Aorta (tissue), 5 donors: ENCODE measurements at regions of chr16 and their contacts with region 1.

Region 1: DNA sequence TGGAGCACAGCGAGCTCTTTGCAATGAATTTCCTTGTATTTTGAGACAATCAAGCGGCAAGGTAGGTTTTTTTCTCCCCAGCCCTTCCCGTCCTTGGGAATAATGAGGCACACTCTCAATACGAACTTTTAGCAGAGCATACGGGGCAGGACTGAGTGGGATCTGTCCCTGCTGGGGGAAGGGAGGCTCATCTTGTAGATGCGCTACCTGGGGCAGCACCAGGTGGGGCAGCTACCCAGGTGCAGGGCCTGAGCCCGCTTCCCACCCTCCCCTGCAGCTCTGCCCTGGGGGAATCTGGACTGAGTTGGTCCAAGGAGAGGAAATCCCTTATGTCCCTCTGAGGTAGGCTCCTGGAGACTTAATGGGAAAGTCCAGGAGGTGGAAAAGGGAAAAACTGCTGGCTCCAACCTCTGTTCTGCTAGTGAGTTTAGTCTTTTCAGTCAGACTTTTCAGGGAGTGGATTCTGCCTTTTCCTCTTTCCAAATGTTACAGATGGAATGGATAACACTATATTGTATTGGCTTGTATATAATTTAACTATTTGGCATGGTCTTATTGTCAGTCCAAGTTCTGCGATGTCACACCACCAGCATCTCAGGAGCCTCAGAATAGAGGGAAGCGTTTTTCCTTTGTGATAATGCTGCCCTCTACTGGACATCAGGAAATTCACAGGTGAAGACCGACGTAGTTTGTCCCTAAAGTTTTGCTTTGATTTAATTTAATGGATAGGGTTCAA is 9.6 kb upstream of the CES1 start:
- DNase-seq: no peak
- ATAC-seq: peak; percentile 63
- H3K4me3 ChIP-seq: no peak overlapping the region
- H3K27ac ChIP-seq: no peak overlapping the region
- H3K4me1 ChIP-seq: no peaks in the 10 kb centered on the region
- H3K27me3 ChIP-seq: peaks cover 0 to 2% of the 10 kb centered on the region in 2 donors

Region 2: GRCh38 chr16:55711959-55712876 is 130.3 kb before region 1 on chr16:
- intact Hi-C with region 1: loop called (anchors 1 to 5 kb)
- DNase-seq: peak; percentile 61 to 85
- ATAC-seq: peak; percentile 74
- H3K4me3 ChIP-seq: no peak overlapping the region
- H3K27ac ChIP-seq: no peak overlapping the region
- H3K4me1 ChIP-seq: no peaks in the 10 kb centered on the region
- H3K27me3 ChIP-seq: peaks cover 0 to 2% of the 10 kb centered on the region in 2 donors

Region 3: DNA sequence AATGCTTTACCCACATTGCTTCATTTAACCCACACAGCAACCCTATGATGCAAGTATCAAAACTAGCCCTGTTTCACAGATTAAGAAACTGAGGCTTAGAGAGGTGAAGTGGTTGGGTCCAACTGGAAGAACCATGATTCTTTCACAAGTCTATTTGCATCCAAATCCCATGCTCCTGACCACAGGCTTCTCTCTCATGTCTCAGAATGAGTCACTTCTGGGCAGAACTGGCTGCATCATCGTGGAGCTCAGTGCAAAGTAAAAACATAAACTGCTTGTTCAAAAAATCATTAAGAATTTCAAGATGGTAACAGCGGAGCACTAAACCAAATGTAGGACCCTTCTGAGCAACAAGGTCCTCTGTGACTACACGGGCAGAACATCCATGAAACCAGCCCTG is 10.6 kb after region 1 on chr16:
- intact Hi-C with region 1: no loop called
- DNase-seq: no peak
- ATAC-seq: no peak
- H3K4me3 ChIP-seq: no peak overlapping the region
- H3K27ac ChIP-seq: no peak overlapping the region
- H3K4me1 ChIP-seq: no peaks in the 10 kb centered on the region
- H3K27me3 ChIP-seq: no peaks in the 10 kb centered on the region

Region 4: GRCh38 chr16:55912022-55912421 is 69.5 kb after region 1 on chr16:
- intact Hi-C with region 1: no loop called
- DNase-seq: no peak
- ATAC-seq: no peak
- H3K4me3 ChIP-seq: no peak overlapping the region
- H3K27ac ChIP-seq: no peak overlapping the region
- H3K4me1 ChIP-seq: no peaks in the 10 kb centered on the region
- H3K27me3 ChIP-seq: no peaks in the 10 kb centered on the region